ENCODE measurements at regions of chrX and their contacts with region 1.

Region 1: GRCh38 chrX:87338510-87338909 is 179.1 kb upstream of the KLHL4 start:
- DNase-seq: peak; percentile 17
- ATAC-seq: no peak
- H3K4me3 ChIP-seq: no peak overlapping the region
- H3K27ac ChIP-seq: no peak overlapping the region; the same call in 1 of the 2 replicates
- H3K4me1 ChIP-seq: no peaks in the 10 kb centered on the region; the same call in 1 of the 2 replicates
- H3K27me3 ChIP-seq: no peaks in the 10 kb centered on the region
- CTCF ChIP-seq: peak; percentile 42; the same call in 1 of the 2 replicates

Region 2: GRCh38 chrX:87160435-87161010 is 178.0 kb before region 1 on chrX:
- CTCF ChIA-PET with region 1: no interaction called
- POLR2A ChIA-PET with region 1: no interaction called
- in situ Hi-C with region 1: no loop called
- intact Hi-C with region 1: no loop called
- DNase-seq: no peak
- ATAC-seq: no peak
- H3K4me3 ChIP-seq: no peak overlapping the region
- H3K27ac ChIP-seq: no peak overlapping the region
- H3K4me1 ChIP-seq: no peaks in the 10 kb centered on the region
- H3K27me3 ChIP-seq: no peaks in the 10 kb centered on the region
- CTCF ChIP-seq: no peak

Region 3: GRCh38 chrX:87327267-87327666 is 11.2 kb before region 1 on chrX:
- CTCF ChIA-PET with region 1: no interaction called
- POLR2A ChIA-PET with region 1: no interaction called
- in situ Hi-C with region 1: no loop called
- intact Hi-C with region 1: no loop called
- DNase-seq: no peak
- ATAC-seq: no peak
- H3K4me3 ChIP-seq: no peak overlapping the region
- H3K27ac ChIP-seq: no peak overlapping the region
- H3K4me1 ChIP-seq: no peaks in the 10 kb centered on the region
- H3K27me3 ChIP-seq: no peaks in the 10 kb centered on the region
- CTCF ChIP-seq: no peak

Region 4: GRCh38 chrX:87517571-87518141 is 179.1 kb after region 1 on chrX and contains the start of gene KLHL4:
- CTCF ChIA-PET with region 1: no interaction called
- POLR2A ChIA-PET with region 1: no interaction called
- in situ Hi-C with region 1: no loop called
- intact Hi-C with region 1: loop called (anchors 5 kb)
- DNase-seq: no peak
- ATAC-seq: peak; percentile 97
- H3K4me3 ChIP-seq: peak within 1 kb of the TSS; percentile 59 to 94
- H3K27ac ChIP-seq: peak within 1 kb of the TSS; percentile 91
- H3K4me1 ChIP-seq: peaks cover 20% of the 10 kb centered on the region
- H3K27me3 ChIP-seq: no peaks in the 10 kb centered on the region
- CTCF ChIP-seq: no peak
- total RNA-seq, gene KLHL4: 27.6 TPM

Measured in Panc1 (cell line).